A549 (cell line): ENCODE measurements at regions of chr17 and their contacts with region 1.

Region 1: GRCh38 chr17:75238684-75239191 is 22.7 kb downstream of the GGA3 start:
- DNase-seq: peak; percentile 89 to 96
- ATAC-seq: peak; percentile 71 to 84
- H3K4me3 ChIP-seq: no peak overlapping the region
- H3K27ac ChIP-seq: no peak overlapping the region
- H3K4me1 ChIP-seq: 0 out of 3 replicates have a peak, but pooled peaks cover 6% of the 10 kb centered on the region
- CTCF ChIP-seq: peak; percentile 92
- EP300 ChIP-seq: no peak
- POLR2A ChIP-seq: no peak
- RAD21 ChIP-seq: peak; percentile 57 to 64

Region 2: GRCh38 chr17:75124041-75124818 is 114.5 kb before region 1 on chr17:
- CTCF ChIA-PET with region 1: interaction called, 13 read pairs
- POLR2A ChIA-PET with region 1: no interaction called
- DNase-seq: peak; percentile 99 to 100
- ATAC-seq: peak; percentile 93
- H3K4me3 ChIP-seq: peak overlapping the region; percentile 31
- H3K27ac ChIP-seq: peak overlapping the region; percentile 92 to 97
- H3K4me1 ChIP-seq: peaks cover 61% of the 10 kb centered on the region
- CTCF ChIP-seq: no peak; the same call in 2 of the 3 replicates
- EP300 ChIP-seq: peak; percentile 30 to 80; a peak in 3 of 5 replicates
- POLR2A ChIP-seq: peak; percentile 62
- RAD21 ChIP-seq: peak; percentile 30 to 39; a peak in 4 of 5 replicates

Region 3: GRCh38 chr17:75199886-75200618 is 38.7 kb before region 1 on chr17:
- CTCF ChIA-PET with region 1: interaction called, 98 read pairs
- POLR2A ChIA-PET with region 1: no interaction called
- DNase-seq: no peak
- ATAC-seq: no peak
- H3K4me3 ChIP-seq: no peak overlapping the region
- H3K27ac ChIP-seq: no peak overlapping the region
- H3K4me1 ChIP-seq: peaks cover 4% of the 10 kb centered on the region; the same call in 1 of the 3 replicates
- CTCF ChIP-seq: no peak
- EP300 ChIP-seq: no peak
- POLR2A ChIP-seq: no peak
- RAD21 ChIP-seq: no peak

Region 4: DNA sequence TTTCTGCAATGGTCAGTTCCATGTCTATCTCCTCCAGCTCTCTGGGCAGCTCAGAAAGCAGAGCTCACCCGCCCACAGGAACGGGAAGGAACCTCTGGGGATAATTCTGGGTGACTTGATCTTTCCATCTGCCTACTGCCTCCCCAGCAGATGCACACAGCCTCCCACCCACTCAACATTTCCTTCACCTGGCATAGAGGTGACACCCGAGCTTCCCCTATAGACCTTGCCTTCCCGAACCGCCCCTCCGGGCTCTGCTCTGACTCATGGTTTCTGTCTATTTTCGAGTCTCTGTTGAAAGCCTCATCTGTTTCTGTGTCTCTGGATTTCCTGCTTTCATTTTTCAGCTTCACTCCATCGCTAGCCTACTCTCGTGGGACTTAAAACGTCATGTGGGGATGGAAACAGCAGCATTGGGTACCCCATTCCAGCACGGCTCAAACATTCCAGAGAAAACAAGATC is 11.3 kb after region 1 on chr17:
- CTCF ChIA-PET with region 1: interaction called, 112 read pairs
- POLR2A ChIA-PET with region 1: no interaction called
- DNase-seq: no peak
- ATAC-seq: no peak; a peak in 1 of 6 replicates
- H3K4me3 ChIP-seq: no peak overlapping the region
- H3K27ac ChIP-seq: no peak overlapping the region
- H3K4me1 ChIP-seq: no peaks in the 10 kb centered on the region
- CTCF ChIP-seq: no peak
- EP300 ChIP-seq: no peak
- POLR2A ChIP-seq: no peak
- RAD21 ChIP-seq: no peak

Region 5: DNA sequence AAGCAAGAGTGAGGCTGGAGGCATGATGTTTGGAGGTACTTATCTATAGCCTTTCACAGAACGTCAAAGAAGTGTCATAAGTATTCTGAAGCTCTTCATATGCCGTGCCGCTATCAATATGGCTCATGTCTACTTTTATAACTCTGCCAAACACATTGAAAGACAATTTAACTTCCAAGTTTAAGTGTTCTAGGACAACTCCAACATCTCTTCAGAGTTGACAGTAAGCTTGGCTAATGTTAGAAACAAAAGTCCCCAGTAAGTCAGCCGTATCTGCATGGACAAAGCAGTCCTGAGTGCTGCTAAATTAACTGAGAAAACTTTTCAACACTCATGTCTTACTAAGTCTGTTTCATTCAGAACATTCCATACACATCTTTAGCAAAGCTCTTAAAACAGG is 134.5 kb after region 1 on chr17:
- CTCF ChIA-PET with region 1: no interaction called
- POLR2A ChIA-PET with region 1: no interaction called
- DNase-seq: no peak
- ATAC-seq: no peak
- H3K4me3 ChIP-seq: no peak overlapping the region
- H3K27ac ChIP-seq: no peak overlapping the region
- H3K4me1 ChIP-seq: peaks cover 6% of the 10 kb centered on the region; the same call in 2 of the 3 replicates
- CTCF ChIP-seq: no peak
- EP300 ChIP-seq: no peak
- POLR2A ChIP-seq: no peak
- RAD21 ChIP-seq: no peak